ENCODE measurements at regions of chr9 and their contacts with region 1.

Region 1: GRCh38 chr9:97921959-97922724 is at the start of gene TRMO:
- DNase-seq: peak; percentile 97 to 99
- ATAC-seq: peak; percentile 92
- total RNA-seq, gene TRMO: 14.0 to 15.0 TPM

Region 2: GRCh38 chr9:97811527-97812246 is 110.5 kb before region 1 on chr9:
- intact Hi-C with region 1: no loop called
- DNase-seq: no peak
- ATAC-seq: no peak

Region 3: DNA sequence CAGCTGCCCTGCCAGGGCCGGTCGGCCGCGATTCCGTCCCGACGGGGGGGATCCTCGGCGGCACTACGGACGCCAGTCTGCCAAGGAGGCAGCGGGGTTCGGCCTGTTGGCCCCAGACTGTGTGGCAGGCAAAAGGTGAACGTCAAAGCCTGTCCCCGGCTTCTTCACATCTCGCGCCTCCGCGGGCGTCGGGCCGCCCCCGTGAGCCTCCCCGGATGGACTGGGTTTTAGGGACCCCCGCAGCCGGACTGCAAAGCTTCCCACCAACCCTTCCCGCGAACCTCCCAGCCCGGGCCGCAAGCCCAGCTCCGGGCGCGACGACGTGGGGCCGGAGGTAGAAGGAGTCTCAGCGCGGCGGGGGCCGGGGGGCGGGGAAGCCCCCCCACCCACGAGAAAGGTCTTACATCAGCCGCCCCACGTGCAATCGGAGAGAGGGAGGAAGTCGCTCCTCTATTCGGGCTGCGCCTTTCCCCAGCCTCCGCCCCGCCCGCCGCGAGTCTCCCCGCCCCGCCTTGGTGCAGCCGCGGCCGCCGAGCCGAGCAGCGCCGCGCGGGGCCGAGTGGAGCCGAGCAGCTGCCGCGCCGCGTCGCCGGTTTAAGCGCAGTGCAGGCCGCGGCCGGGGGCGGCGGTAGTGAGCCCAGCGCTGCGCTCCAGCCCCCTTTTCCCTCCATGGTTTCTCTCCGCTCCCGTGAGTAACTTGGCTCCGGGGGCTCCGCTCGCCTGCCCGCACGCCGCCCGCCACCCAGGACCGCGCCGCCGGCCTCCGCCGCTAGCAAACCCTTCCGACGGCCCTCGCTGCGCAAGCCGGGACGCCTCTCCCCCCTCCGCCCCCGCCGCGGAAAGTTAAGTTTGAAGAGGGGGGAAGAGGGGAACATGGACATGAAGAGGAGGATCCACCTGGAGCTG is 60.8 kb after region 1 on chr9 and contains the start of gene ANP32B:
- intact Hi-C with region 1: loop called in 1 of 2 experiments (anchors 10 kb)
- DNase-seq: peak; percentile 91 to 92
- ATAC-seq: peak; percentile 81
- total RNA-seq, gene ANP32B: 98.2 to 137 TPM

Region 4: DNA sequence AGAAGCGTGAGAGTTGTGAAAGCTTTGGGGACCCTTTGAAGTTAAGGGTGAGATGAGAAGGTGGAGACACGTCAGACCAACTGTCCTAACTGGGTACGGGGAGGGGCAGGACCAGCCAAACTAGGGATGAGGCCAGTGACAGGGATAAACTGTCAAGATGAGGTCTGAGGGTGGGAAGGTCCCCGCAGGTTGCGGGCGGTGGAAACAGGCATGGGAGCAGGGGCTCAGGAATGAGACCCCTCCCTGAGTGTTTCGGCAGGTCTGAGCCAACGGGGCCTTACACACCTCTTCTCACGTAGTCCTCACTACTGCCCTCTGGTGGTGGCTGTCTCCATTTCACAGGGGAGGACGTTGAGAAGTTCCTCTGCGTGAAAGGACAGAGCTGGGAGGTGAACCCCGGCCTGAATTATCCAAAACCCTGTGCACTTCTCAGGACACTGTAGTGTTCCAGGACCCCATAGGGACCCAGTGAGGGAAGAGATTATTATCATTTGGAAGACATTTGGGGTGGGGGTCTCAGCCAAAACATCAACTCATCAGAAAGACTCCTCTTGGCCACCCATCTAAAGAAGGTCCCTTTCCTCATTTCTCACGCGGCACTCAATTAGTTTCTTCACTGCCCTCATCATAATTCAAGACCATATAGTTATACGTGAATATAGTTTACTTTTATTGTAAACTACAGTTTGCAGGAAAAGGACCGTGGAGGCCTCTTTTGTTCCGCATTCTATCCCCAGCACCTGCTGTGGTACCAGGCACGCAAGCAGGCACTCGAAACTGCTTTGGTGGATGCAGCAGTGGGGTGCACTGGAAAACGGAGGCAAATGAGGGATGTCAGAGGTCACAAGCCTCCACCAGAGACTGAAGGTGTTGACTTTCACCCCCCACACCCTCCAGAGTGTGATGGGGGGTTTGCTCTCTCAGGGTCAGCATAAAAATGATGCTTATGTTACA is 112.7 kb after region 1 on chr9:
- intact Hi-C with region 1: loop called in 1 of 2 experiments (anchors 10 kb)
- DNase-seq: peak; percentile 77 to 94
- ATAC-seq: peak; percentile 78

Region 5: GRCh38 chr9:98255578-98256296 is 333.6 kb after region 1 on chr9 and contains the start of gene TBC1D2:
- intact Hi-C with region 1: loop called in 1 of 2 experiments (anchors 5 kb)
- DNase-seq: peak; percentile 96 to 98
- ATAC-seq: peak; percentile 93
- total RNA-seq, gene TBC1D2: 26.0 to 28.3 TPM

Measured in left colon (tissue), 2 donors.